ENCODE measurements at regions of chr19 and their contacts with region 1.

Region 1: DNA sequence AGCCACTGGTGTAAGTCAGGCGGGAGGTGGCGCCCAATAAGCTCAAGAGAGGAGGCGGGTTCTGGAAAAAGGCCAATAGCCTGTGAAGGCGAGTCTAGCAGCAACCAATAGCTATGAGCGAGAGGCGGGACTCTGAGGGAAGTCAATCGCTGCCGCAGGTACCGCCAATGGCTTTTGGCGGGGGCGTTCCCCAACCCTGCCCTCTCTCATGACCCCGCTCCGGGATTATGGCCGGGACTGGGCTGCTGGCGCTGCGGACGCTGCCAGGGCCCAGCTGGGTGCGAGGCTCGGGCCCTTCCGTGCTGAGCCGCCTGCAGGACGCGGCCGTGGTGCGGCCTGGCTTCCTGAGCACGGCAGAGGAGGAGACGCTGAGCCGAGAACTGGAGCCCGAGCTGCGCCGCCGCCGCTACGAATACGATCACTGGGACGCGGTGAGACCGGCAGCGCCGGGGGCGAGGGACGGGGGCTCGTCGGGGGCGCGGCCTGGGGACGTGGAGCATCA is at the start of gene ALKBH7:
- DNase-seq: peak; percentile 84
- ATAC-seq: peak; percentile 74
- H3K4me3 Mint-ChIP-seq: peak within 1 kb of the TSS; percentile 92
- H3K27ac Mint-ChIP-seq: peak within 1 kb of the TSS; percentile 93
- H3K4me1 Mint-ChIP-seq: peaks cover 15% of the 10 kb centered on the region
- H3K27me3 Mint-ChIP-seq: no peaks in the 10 kb centered on the region
- CTCF ChIP-seq: no peak
- total RNA-seq, gene ALKBH7: 48.4 and 52.9 TPM in 2 replicates

Region 2: GRCh38 chr19:5977785-5978605 is 394.6 kb before region 1 on chr19 and contains the start of gene RANBP3:
- CTCF ChIA-PET with region 1: no interaction called
- POLR2A ChIA-PET with region 1: no interaction called
- intact Hi-C with region 1: loop called (anchors 5 kb)
- DNase-seq: peak; percentile 97
- ATAC-seq: peak; percentile 91
- H3K4me3 Mint-ChIP-seq: peak within 1 kb of the TSS; percentile 91
- H3K27ac Mint-ChIP-seq: peak within 1 kb of the TSS; percentile 83
- H3K4me1 Mint-ChIP-seq: peaks cover 52% of the 10 kb centered on the region
- H3K27me3 Mint-ChIP-seq: no peaks in the 10 kb centered on the region
- CTCF ChIP-seq: no peak
- total RNA-seq, gene RANBP3: 77.0 and 98.5 TPM in 2 replicates

Region 3: GRCh38 chr19:6393074-6393983 is 20.7 kb after region 1 on chr19 and contains the start of gene GTF2F1:
- CTCF ChIA-PET with region 1: no interaction called
- POLR2A ChIA-PET with region 1: interaction called, 11 read pairs
- intact Hi-C with region 1: loop called (anchors 1 kb)
- DNase-seq: peak; percentile 92
- ATAC-seq: peak; percentile 85
- H3K4me3 Mint-ChIP-seq: peak within 1 kb of the TSS; percentile 94
- H3K27ac Mint-ChIP-seq: peak within 1 kb of the TSS; percentile 94
- H3K4me1 Mint-ChIP-seq: peaks cover 23% of the 10 kb centered on the region
- H3K27me3 Mint-ChIP-seq: no peaks in the 10 kb centered on the region
- CTCF ChIP-seq: no peak
- total RNA-seq, gene GTF2F1: 67.6 and 68.1 TPM in 2 replicates

Region 4: GRCh38 chr19:6460101-6460853 is 87.6 kb after region 1 on chr19:
- CTCF ChIA-PET with region 1: no interaction called
- POLR2A ChIA-PET with region 1: no interaction called
- intact Hi-C with region 1: loop called (anchors 1 kb)
- DNase-seq: peak; percentile 90
- ATAC-seq: peak; percentile 82
- H3K4me3 Mint-ChIP-seq: peak overlapping the region; percentile 90
- H3K27ac Mint-ChIP-seq: peak overlapping the region; percentile 79
- H3K4me1 Mint-ChIP-seq: peaks cover 42% of the 10 kb centered on the region
- H3K27me3 Mint-ChIP-seq: peaks cover 3% of the 10 kb centered on the region
- CTCF ChIP-seq: no peak

Region 5: GRCh38 chr19:6753178-6754031 is 380.8 kb after region 1 on chr19:
- CTCF ChIA-PET with region 1: no interaction called
- POLR2A ChIA-PET with region 1: no interaction called
- intact Hi-C with region 1: loop called (anchors 5 kb)
- DNase-seq: peak; percentile 91
- ATAC-seq: peak; percentile 93
- H3K4me3 Mint-ChIP-seq: peak overlapping the region; percentile 87
- H3K27ac Mint-ChIP-seq: peak overlapping the region; percentile 82
- H3K4me1 Mint-ChIP-seq: peaks cover 33% of the 10 kb centered on the region
- H3K27me3 Mint-ChIP-seq: no peaks in the 10 kb centered on the region
- CTCF ChIP-seq: no peak

Region 6: GRCh38 chr19:6801485-6802086 is 428.9 kb after region 1 on chr19:
- CTCF ChIA-PET with region 1: no interaction called
- POLR2A ChIA-PET with region 1: interaction called, 4 read pairs
- intact Hi-C with region 1: loop called (anchors 5 kb)
- DNase-seq: peak; percentile 89
- ATAC-seq: peak; percentile 71
- H3K4me3 Mint-ChIP-seq: peak overlapping the region; percentile 83
- H3K27ac Mint-ChIP-seq: peak overlapping the region; percentile 94
- H3K4me1 Mint-ChIP-seq: peaks cover 83% of the 10 kb centered on the region
- H3K27me3 Mint-ChIP-seq: no peaks in the 10 kb centered on the region
- CTCF ChIP-seq: no peak